OCI-LY7 (cell line): ENCODE measurements at regions of chr1 and their contacts with region 1.

Region 1: DNA sequence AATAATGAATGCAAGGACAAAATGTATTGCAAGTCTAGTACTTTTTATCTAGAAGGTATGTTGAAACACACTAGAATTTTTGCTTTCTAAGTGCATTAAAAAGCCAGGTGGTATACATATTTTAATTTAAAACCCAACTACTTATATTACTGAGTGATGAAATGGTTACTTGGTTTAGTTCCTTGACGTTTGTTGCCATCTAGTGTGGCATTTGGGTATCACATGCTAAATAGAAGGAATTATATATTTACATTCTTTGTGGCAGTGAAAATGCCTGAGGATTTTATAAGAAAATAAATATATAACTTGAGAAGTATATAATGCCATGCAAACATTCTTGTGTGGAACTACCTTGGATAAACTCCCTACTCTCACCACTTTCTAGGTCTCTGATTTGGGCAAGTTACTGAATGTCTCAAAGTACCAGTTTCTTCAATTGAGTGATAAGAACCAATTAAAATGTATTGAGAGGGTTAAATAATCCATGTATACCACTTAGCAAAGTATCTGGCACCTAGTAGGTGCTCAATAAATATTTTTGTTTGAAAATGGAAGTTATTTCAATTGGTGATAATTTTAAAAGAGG is 69.6 kb downstream of the SDCCAG8 start:
- DNase-seq: peak; percentile 59
- H3K4me3 ChIP-seq: no peak overlapping the region
- H3K27ac ChIP-seq: no peak overlapping the region
- H3K4me1 ChIP-seq: no peaks in the 10 kb centered on the region
- CTCF ChIP-seq: peak; percentile 95

Region 2: GRCh38 chr1:242467556-242468145 is 857.7 kb before region 1 on chr1:
- CTCF ChIA-PET with region 1: no interaction called
- POLR2A ChIA-PET with region 1: no interaction called
- intact Hi-C with region 1: loop called (anchors 5 kb)
- DNase-seq: peak; percentile 30
- H3K4me3 ChIP-seq: no peak overlapping the region
- H3K27ac ChIP-seq: no peak overlapping the region
- H3K4me1 ChIP-seq: no peaks in the 10 kb centered on the region
- CTCF ChIP-seq: peak; percentile 77

Region 3: DNA sequence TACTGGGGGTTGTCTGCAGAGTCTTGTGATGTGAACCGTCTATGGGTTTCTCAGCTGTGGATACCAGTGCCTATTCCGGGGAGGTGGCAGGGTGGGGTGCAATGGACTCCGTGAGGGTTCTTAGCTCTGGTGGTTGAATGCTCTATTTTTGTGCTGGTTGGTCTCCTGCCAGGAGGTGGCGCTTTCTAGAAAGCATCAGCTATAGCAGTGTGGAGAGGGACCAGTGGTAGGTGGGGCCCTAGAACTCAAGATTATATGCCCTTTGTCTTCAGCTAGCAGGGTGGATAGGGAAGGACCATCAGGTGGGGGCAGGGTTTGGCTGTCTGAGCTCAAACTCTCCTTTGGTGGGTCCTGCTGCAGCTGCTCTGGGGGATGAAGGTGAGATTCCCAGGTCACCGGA is 673.6 kb before region 1 on chr1:
- CTCF ChIA-PET with region 1: no interaction called
- POLR2A ChIA-PET with region 1: no interaction called
- intact Hi-C with region 1: loop called (anchors 10 kb)
- DNase-seq: peak; percentile 14
- H3K4me3 ChIP-seq: no peak overlapping the region
- H3K27ac ChIP-seq: no peak overlapping the region
- H3K4me1 ChIP-seq: no peaks in the 10 kb centered on the region
- CTCF ChIP-seq: peak; percentile 63